H1 (cell line): ENCODE measurements at regions of chr2 and their contacts with region 1.

Region 1: GRCh38 chr2:30026087-30027055 is 105.0 kb upstream of the ALK start:
- DNase-seq: peak in 1 of 2 experiments; percentile 74
- H3K4me3 ChIP-seq: no peak overlapping the region
- H3K27ac ChIP-seq: no peak overlapping the region
- H3K4me1 ChIP-seq: peaks cover 1 to 11% (median 4%) of the 10 kb centered on the region in 4 experiments; a peak in 5 of 7 replicates
- H3K27me3 ChIP-seq: no peaks in the 10 kb centered on the region
- CTCF ChIP-seq: peak; percentile 88 to 89 (median 89)
- EP300 ChIP-seq: no peak
- POLR2A ChIP-seq: no peak
- RAD21 ChIP-seq: peak; percentile 88 to 92

Region 2: DNA sequence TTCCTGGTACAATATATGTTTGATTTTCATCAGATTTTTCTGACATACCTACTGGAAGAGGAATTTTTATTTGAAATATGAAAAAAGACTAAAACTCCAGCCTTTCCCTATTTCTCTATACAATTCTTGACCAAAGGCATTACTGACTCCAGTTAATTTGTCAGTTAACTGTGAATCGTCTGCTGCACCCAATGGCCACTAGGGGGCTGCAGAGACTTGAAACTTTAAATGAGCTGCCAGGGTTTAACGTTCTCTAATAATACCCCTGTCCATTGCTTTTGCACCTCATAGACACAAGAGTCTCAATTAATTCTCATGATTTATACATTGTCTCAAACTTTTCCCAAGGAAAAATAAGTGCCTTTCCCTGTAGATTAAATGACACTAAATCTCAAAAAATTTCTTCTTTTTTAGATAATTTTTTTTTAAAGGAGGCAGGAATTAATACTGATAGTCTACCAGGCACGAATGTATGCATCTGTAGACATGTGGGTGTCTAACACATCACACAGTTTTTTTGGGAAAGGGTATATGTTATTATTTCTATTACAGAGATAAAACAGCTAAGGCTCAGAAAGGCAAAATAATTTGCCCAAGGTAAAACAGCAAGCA is 103.2 kb before region 1 on chr2:
- CTCF ChIA-PET with region 1: interaction called, 196 read pairs
- POLR2A ChIA-PET with region 1: interaction called, 3 read pairs
- DNase-seq: peak in 1 of 2 experiments; percentile 58
- H3K4me3 ChIP-seq: no peak overlapping the region
- H3K27ac ChIP-seq: no peak overlapping the region
- H3K4me1 ChIP-seq: peaks cover 3 to 18% (median 6%) of the 10 kb centered on the region in 4 experiments; a peak in 6 of 7 replicates
- H3K27me3 ChIP-seq: peaks cover 20 to 31% (median 30%) of the 10 kb centered on the region in 4 experiments
- CTCF ChIP-seq: peak in 2 of 3 experiments; percentile 79 to 90; a peak in 3 of 4 replicates
- EP300 ChIP-seq: no peak
- POLR2A ChIP-seq: no peak
- RAD21 ChIP-seq: peak; percentile 87 to 92

Region 3: GRCh38 chr2:29940706-29941105 is 85.7 kb before region 1 on chr2:
- CTCF ChIA-PET with region 1: interaction called, 18 read pairs
- POLR2A ChIA-PET with region 1: no interaction called
- DNase-seq: no peak
- H3K4me3 ChIP-seq: no peak overlapping the region
- H3K27ac ChIP-seq: no peak overlapping the region
- H3K4me1 ChIP-seq: no peaks in the 10 kb centered on the region
- H3K27me3 ChIP-seq: no peaks in the 10 kb centered on the region
- CTCF ChIP-seq: no peak
- EP300 ChIP-seq: no peak
- POLR2A ChIP-seq: no peak
- RAD21 ChIP-seq: no peak

Region 4: GRCh38 chr2:29950481-29950880 is 75.9 kb before region 1 on chr2:
- CTCF ChIA-PET with region 1: interaction called, 12 read pairs
- POLR2A ChIA-PET with region 1: no interaction called
- DNase-seq: no peak
- H3K4me3 ChIP-seq: no peak overlapping the region
- H3K27ac ChIP-seq: no peak overlapping the region
- H3K4me1 ChIP-seq: no peaks in the 10 kb centered on the region; a peak in 1 of 7 replicates
- H3K27me3 ChIP-seq: no peaks in the 10 kb centered on the region
- CTCF ChIP-seq: no peak
- EP300 ChIP-seq: no peak
- POLR2A ChIP-seq: no peak
- RAD21 ChIP-seq: no peak

Region 5: DNA sequence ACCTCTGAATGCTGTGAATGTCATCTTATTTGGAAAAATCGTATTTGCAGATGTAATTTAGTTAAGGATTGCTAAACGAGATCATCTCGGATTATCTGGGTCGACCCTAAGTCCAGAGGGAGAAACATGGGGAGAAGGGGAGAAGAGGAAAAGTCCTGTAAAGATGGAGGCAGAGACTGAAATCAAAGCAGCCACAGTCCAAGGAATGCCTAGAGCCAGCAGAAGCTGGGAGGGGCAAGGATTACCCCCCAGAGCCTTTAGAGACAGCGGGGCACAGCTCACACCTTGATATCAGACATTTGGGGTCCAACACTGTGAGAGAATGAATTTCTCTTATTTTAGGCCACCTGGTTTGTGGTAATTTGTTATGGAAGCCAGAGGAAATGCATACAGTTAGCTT is 15.5 kb after region 1 on chr2:
- CTCF ChIA-PET with region 1: interaction called, 14 read pairs
- POLR2A ChIA-PET with region 1: no interaction called
- DNase-seq: no peak
- H3K4me3 ChIP-seq: no peak overlapping the region
- H3K27ac ChIP-seq: no peak overlapping the region
- H3K4me1 ChIP-seq: no peaks in the 10 kb centered on the region
- H3K27me3 ChIP-seq: no peaks in the 10 kb centered on the region
- CTCF ChIP-seq: no peak
- EP300 ChIP-seq: no peak
- POLR2A ChIP-seq: no peak
- RAD21 ChIP-seq: no peak

Region 6: GRCh38 chr2:30072250-30072842 is 46.0 kb after region 1 on chr2:
- CTCF ChIA-PET with region 1: interaction called, 19 read pairs
- POLR2A ChIA-PET with region 1: no interaction called
- DNase-seq: peak; percentile 36 to 83
- H3K4me3 ChIP-seq: no peak overlapping the region
- H3K27ac ChIP-seq: no peak overlapping the region
- H3K4me1 ChIP-seq: peaks cover 0 to 3% (median 0%) of the 10 kb centered on the region in 4 experiments; a peak in 1 of 7 replicates
- H3K27me3 ChIP-seq: no peaks in the 10 kb centered on the region
- CTCF ChIP-seq: peak; percentile 69 to 95 (median 79)
- EP300 ChIP-seq: no peak
- POLR2A ChIP-seq: no peak
- RAD21 ChIP-seq: peak; percentile 93